H1 (cell line): ENCODE measurements at regions of chr4 and their contacts with region 1.

Region 1: GRCh38 chr4:37603070-37603468 is 83.1 kb downstream of the RELL1 start:
- DNase-seq: peak; percentile 60 to 96
- H3K4me3 ChIP-seq: no peak overlapping the region
- H3K27ac ChIP-seq: no peak overlapping the region
- H3K4me1 ChIP-seq: peaks cover 0 to 3% (median 1%) of the 10 kb centered on the region in 4 experiments; a peak in 4 of 7 replicates
- H3K27me3 ChIP-seq: no peaks in the 10 kb centered on the region; a peak in 1 of 7 replicates
- CTCF ChIP-seq: peak; percentile 92 to 95 (median 95)
- EP300 ChIP-seq: no peak
- POLR2A ChIP-seq: no peak
- RAD21 ChIP-seq: peak; percentile 94 to 95

Region 2: GRCh38 chr4:37452952-37453280 is 150.2 kb before region 1 on chr4:
- CTCF ChIA-PET with region 1: interaction called, 14 read pairs
- POLR2A ChIA-PET with region 1: no interaction called
- DNase-seq: no peak
- H3K4me3 ChIP-seq: peak overlapping the region; percentile 31 to 69 (median 48); a peak in 7 of 8 replicates
- H3K27ac ChIP-seq: no peak overlapping the region
- H3K4me1 ChIP-seq: peaks cover 0 to 5% (median 1%) of the 10 kb centered on the region in 4 experiments; a peak in 2 of 7 replicates
- H3K27me3 ChIP-seq: peaks cover 0 to 17% (median 6%) of the 10 kb centered on the region in 4 experiments; a peak in 5 of 7 replicates
- CTCF ChIP-seq: peak in 2 of 3 experiments; percentile 69 to 72; a peak in 3 of 4 replicates
- EP300 ChIP-seq: no peak
- POLR2A ChIP-seq: no peak
- RAD21 ChIP-seq: peak; percentile 81

Region 3: GRCh38 chr4:37623125-37623524 is 20.1 kb after region 1 on chr4:
- CTCF ChIA-PET with region 1: interaction called, 26 read pairs
- POLR2A ChIA-PET with region 1: no interaction called
- DNase-seq: no peak
- H3K4me3 ChIP-seq: no peak overlapping the region
- H3K27ac ChIP-seq: no peak overlapping the region
- H3K4me1 ChIP-seq: no peaks in the 10 kb centered on the region; a peak in 1 of 7 replicates
- H3K27me3 ChIP-seq: no peaks in the 10 kb centered on the region
- CTCF ChIP-seq: no peak
- EP300 ChIP-seq: no peak
- POLR2A ChIP-seq: no peak
- RAD21 ChIP-seq: no peak

Region 4: DNA sequence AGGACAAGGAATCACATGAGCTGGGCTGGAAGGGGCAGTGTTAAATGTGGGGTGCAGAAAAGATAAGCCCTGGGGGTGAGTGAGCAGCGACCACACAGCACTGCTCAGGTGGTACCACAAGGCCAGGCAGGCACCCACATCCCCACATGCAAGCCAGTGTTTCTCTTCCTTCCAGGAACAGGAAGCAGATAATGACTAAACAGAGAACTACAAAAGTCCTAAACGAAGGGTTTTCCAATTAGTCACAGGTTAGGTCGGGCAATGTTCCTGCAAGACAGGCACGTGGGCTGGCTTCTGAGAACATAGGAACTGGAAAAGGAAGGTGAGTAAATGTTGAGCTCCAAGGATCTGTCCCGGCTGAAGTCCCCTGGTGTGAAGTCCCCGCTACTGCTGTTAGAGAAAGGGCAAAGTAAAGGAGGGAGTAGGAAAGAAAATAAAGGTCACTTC is 63.6 kb after region 1 on chr4:
- CTCF ChIA-PET with region 1: interaction called, 13 read pairs
- POLR2A ChIA-PET with region 1: no interaction called
- DNase-seq: no peak
- H3K4me3 ChIP-seq: no peak overlapping the region
- H3K27ac ChIP-seq: no peak overlapping the region
- H3K4me1 ChIP-seq: peaks cover 4 to 19% (median 11%) of the 10 kb centered on the region in 4 experiments
- H3K27me3 ChIP-seq: no peaks in the 10 kb centered on the region; a peak in 1 of 7 replicates
- CTCF ChIP-seq: no peak
- EP300 ChIP-seq: no peak
- POLR2A ChIP-seq: no peak
- RAD21 ChIP-seq: no peak

Region 5: GRCh38 chr4:37788819-37789218 is 185.8 kb after region 1 on chr4:
- CTCF ChIA-PET with region 1: interaction called, 19 read pairs
- POLR2A ChIA-PET with region 1: no interaction called
- DNase-seq: no peak
- H3K4me3 ChIP-seq: no peak overlapping the region
- H3K27ac ChIP-seq: no peak overlapping the region
- H3K4me1 ChIP-seq: no peaks in the 10 kb centered on the region
- H3K27me3 ChIP-seq: no peaks in the 10 kb centered on the region
- CTCF ChIP-seq: no peak
- EP300 ChIP-seq: no peak
- POLR2A ChIP-seq: no peak
- RAD21 ChIP-seq: no peak

Region 6: DNA sequence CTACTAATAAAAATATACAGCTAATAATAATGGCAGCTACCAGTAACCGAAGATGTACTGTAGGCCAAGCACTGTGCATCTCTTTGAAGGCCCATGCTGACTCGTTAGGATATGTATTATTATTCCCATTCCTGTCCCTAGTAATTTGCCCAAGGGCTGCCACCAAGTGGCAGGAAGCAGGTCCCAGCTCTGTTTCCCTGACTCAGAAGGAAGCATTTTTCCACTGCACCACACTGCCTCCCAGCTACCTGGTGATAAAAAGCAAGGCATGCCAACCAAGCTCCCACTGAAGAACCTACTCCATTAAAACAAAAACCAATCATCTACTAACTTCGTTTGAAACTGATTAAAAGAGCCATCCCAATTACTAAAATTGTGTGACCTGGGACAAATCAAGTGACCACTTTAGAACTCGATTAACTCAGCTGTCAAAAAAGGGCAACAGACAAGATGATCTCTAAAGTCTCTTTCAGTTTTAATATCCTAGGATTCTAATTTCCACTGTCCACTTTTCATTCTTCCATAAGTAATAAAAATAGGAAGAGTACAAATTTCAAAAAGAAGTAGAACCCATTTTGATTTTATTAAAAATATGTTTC is 199.1 kb after region 1 on chr4:
- CTCF ChIA-PET with region 1: interaction called, 60 read pairs
- POLR2A ChIA-PET with region 1: interaction called, 3 read pairs
- DNase-seq: no peak
- H3K4me3 ChIP-seq: no peak overlapping the region
- H3K27ac ChIP-seq: no peak overlapping the region
- H3K4me1 ChIP-seq: peaks cover 0 to 6% (median 1%) of the 10 kb centered on the region in 4 experiments; a peak in 2 of 7 replicates
- H3K27me3 ChIP-seq: no peaks in the 10 kb centered on the region
- CTCF ChIP-seq: peak; percentile 59 to 95 (median 70)
- EP300 ChIP-seq: no peak
- POLR2A ChIP-seq: no peak
- RAD21 ChIP-seq: peak; percentile 81 to 82